Activated CD4-positive, alpha-beta T cell treated with anti-CD3 and anti-CD28 coated beads for 36 hours (primary cell): ENCODE measurements at regions of chr17 and their contacts with region 1.

Region 1: DNA sequence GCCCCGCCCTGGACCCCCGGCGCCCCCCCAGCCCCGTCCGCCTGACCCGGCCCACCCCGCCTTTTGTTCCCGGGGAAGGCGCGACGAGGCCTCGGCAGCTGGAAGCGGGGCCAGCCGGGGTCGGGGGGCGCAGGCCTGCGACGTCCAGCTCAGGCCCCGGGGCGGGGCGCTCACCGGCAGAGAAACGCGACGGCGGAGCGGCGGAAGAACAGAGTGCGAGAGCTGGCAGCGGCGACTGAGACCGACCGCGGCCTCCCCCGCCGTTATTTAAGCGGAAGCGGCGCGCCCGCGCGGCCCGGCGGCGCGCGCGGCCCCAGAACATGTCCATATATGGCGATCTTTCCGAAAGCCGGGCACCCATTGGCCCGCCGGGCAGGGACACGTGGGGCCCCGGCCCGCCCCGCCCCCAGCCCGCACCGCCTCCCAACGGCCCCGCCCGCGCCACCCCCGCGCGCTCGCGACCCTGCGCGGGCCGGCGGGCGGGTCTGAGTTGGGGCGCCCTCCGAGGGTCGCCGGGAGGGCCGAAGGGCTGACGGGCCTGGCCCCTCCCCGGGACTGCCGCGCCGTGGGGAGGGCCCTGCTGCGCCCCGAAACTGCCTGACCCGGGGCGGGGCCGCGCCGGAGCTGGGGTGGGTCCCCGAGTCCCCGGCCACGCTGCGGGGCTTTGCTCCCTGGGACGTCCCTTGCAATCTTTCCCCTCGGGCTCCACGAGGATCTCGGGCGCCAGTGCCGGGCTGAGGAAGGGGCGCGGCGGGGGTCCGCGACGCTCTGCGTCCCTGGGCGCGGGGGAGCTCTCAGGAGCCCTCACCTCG is at the start of gene ACTG1:
- DNase-seq: peak; percentile 95
- ATAC-seq: peak; percentile 61
- H3K4me3 Mint-ChIP-seq: peak within 1 kb of the TSS; percentile 97
- H3K27ac Mint-ChIP-seq: peak within 1 kb of the TSS; percentile 89
- H3K4me1 Mint-ChIP-seq: peaks cover 21% of the 10 kb centered on the region
- H3K27me3 Mint-ChIP-seq: no peaks in the 10 kb centered on the region
- total RNA-seq, gene ACTG1: 4,119 to 5,987 TPM

Region 2: DNA sequence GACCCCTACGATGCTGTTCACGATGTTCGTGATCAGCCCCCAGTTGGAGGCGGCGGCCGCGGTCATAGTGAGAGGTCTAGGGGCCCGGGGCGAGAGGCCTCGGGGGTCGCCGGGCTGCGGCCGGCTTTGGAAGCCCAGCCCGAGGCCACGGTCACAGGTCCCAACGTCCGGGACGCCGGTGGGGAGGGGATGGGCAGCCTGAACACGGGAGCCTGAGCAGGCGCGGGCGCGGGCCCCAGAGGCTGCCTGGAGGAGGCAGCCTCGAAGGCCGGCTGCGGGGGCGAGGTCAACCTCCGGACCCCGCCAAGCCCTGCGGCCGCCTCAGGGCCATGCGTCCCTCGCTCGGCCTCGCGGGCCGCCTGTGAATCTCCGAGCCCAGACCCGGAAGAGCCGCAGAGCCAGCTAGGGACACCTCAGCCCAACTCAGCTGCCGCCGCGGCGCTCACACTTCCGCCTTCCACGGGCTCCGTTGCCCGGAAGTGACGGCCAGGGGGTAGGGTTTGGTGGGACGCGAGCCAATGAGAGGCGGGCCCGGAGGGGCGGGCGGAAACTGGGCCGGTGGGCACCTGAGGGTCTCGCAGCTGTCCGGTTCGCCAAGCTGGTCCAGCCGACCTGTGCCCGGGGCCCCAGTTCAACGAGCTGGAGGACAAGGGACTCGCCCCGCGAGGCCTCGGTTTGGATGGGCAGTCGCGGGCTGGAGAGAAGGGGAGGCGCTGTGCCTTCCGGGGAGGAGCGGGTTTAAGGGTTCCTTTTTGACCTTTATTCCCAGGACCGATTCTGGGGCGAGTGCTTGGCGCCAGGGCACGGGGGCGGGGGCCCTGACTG is 217.7 kb before region 1 on chr17 and contains the start of gene SLC38A10:
- CTCF ChIA-PET with region 1: interaction called, 3 read pairs
- POLR2A ChIA-PET with region 1: no interaction called
- intact Hi-C with region 1: loop called in 1 of 2 experiments (anchors 1 kb)
- DNase-seq: peak; percentile 95
- ATAC-seq: peak; percentile 91
- H3K4me3 Mint-ChIP-seq: peak within 1 kb of the TSS; percentile 89
- H3K27ac Mint-ChIP-seq: peak within 1 kb of the TSS; percentile 96
- H3K4me1 Mint-ChIP-seq: peaks cover 36% of the 10 kb centered on the region
- H3K27me3 Mint-ChIP-seq: no peaks in the 10 kb centered on the region
- total RNA-seq, gene SLC38A10: 47.6 to 52.9 TPM

Region 3: DNA sequence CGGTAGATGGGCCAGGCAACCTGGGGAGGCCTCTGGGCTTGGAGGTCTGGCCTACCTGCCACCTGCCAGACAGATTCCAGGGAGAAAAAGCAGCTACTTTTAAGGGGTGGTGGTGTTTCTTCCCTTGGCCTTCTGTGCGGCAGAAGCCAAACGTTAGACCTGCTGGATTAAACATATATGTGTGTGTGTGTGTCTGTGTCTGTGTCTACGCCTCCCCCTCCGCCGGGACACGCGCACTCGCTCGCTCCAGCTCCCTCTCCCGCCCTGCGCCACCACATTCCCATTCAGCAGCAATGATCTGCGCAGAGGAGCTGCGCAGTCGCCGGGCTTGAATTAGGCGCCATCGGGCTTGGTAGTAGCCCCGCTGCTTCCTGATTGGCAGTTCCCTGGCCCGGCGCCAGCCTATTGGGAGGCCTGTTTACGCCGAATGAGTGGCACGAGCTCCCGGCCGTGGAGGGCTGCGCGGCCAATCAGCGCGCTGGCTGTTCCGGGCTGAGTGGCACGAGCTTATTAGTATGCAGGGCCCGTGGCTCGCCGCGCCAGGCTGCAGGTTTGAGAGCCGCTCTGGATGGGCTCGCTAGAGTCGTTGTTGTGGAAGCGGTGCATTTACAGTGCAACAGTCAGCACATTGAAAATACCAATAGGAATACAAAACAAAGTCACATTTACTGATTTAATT is 117.7 kb before region 1 on chr17 and contains the start of gene BAHCC1:
- CTCF ChIA-PET with region 1: no interaction called
- POLR2A ChIA-PET with region 1: interaction called, 3 read pairs
- intact Hi-C with region 1: loop called (anchors 1 to 2 kb)
- DNase-seq: peak; percentile 97
- ATAC-seq: peak; percentile 92
- H3K4me3 Mint-ChIP-seq: peak within 1 kb of the TSS; percentile 46
- H3K27ac Mint-ChIP-seq: peak within 1 kb of the TSS; percentile 39
- H3K4me1 Mint-ChIP-seq: peaks cover 24% of the 10 kb centered on the region
- H3K27me3 Mint-ChIP-seq: peaks cover 51% of the 10 kb centered on the region
- total RNA-seq, gene BAHCC1: 0.05 TPM in 1 of 2 experiments, not detected in the other

Region 4: GRCh38 chr17:81553018-81553615 is 40.4 kb after region 1 on chr17:
- CTCF ChIA-PET with region 1: interaction called, 4 read pairs
- POLR2A ChIA-PET with region 1: interaction called, 11 read pairs
- intact Hi-C with region 1: loop called (anchors 1 to 2 kb)
- DNase-seq: peak; percentile 91
- ATAC-seq: peak; percentile 78
- H3K4me3 Mint-ChIP-seq: peak overlapping the region; percentile 89
- H3K27ac Mint-ChIP-seq: peak overlapping the region; percentile 86
- H3K4me1 Mint-ChIP-seq: peaks cover 38% of the 10 kb centered on the region
- H3K27me3 Mint-ChIP-seq: no peaks in the 10 kb centered on the region

Region 5: GRCh38 chr17:81636505-81637288 is 123.9 kb after region 1 on chr17 and contains the starts of genes NPLOC4 and TSPAN10:
- CTCF ChIA-PET with region 1: no interaction called
- POLR2A ChIA-PET with region 1: no interaction called
- intact Hi-C with region 1: loop called in 1 of 2 experiments (anchors 2 kb)
- DNase-seq: peak; percentile 91
- ATAC-seq: peak; percentile 89
- H3K4me3 Mint-ChIP-seq: peak within 1 kb of the TSS; percentile 96
- H3K27ac Mint-ChIP-seq: peak within 1 kb of the TSS; percentile 84
- H3K4me1 Mint-ChIP-seq: peaks cover 23% of the 10 kb centered on the region
- H3K27me3 Mint-ChIP-seq: no peaks in the 10 kb centered on the region
- total RNA-seq, gene NPLOC4: 71.8 to 93.1 TPM
- total RNA-seq, gene TSPAN10: 0.34 to 0.35 TPM

Region 6: GRCh38 chr17:81683584-81684237 is 170.9 kb after region 1 on chr17 and contains the starts of genes ARL16 and HGS:
- CTCF ChIA-PET with region 1: no interaction called
- POLR2A ChIA-PET with region 1: no interaction called
- intact Hi-C with region 1: loop called in 1 of 2 experiments (anchors 5 kb)
- DNase-seq: peak; percentile 98
- ATAC-seq: peak; percentile 98
- H3K4me3 Mint-ChIP-seq: peak within 1 kb of the TSS; percentile 87
- H3K27ac Mint-ChIP-seq: peak within 1 kb of the TSS; percentile 83
- H3K4me1 Mint-ChIP-seq: peaks cover 30% of the 10 kb centered on the region
- H3K27me3 Mint-ChIP-seq: no peaks in the 10 kb centered on the region
- total RNA-seq, gene ARL16: 39.0 to 39.1 TPM
- total RNA-seq, gene HGS: 100 to 102 TPM

Region 7: GRCh38 chr17:82041144-82041814 is 528.5 kb after region 1 on chr17:
- CTCF ChIA-PET with region 1: no interaction called
- POLR2A ChIA-PET with region 1: no interaction called
- intact Hi-C with region 1: no loop called
- DNase-seq: no peak
- ATAC-seq: no peak
- H3K4me3 Mint-ChIP-seq: no peak overlapping the region
- H3K27ac Mint-ChIP-seq: peak overlapping the region; percentile 15
- H3K4me1 Mint-ChIP-seq: peaks cover 12% of the 10 kb centered on the region
- H3K27me3 Mint-ChIP-seq: no peaks in the 10 kb centered on the region

Region 8: DNA sequence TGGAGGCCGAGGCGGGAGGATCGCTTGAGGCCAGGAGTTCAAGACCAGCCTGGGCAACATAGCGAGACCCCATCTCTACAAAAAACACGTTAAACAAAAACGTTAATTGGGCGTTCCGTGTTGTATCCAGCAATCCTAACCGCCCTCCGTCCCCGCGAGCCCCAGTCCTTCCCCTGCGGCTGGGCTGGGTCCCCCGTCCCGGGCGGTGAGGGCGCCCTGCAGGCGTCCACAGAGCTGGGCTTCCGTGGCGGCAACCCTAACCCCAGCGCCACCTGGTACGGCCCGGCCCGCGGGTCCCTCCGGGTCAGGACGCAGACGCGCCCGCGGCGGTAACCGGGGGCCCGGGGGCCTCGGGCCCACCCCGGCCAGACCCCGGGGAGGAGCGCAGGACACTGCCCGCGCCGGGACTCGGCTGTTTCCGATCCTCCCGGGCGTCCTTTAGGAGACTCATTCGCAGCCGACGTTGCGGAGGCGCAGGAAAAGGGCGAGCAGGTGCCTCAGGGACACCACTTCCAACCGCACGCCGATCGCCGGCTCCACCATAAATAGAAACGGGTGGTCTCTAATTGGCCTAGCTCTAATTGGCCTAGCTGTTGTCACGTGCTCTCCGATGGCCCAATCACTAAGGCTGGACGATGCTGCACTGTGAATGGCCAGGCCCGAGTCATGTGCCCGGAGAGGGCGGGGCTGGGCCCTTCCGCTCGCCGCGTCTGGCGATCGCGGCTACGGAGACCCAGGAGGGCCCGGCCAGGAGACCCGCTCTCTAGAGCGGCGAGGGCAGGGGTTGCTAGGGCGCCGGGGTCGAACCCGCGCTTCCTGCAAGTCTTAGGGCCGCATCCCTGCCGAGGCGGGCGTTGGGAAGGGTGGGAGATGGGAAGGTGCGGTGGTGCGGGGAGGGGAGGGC is 779.7 kb after region 1 on chr17:
- CTCF ChIA-PET with region 1: no interaction called
- POLR2A ChIA-PET with region 1: no interaction called
- intact Hi-C with region 1: loop called in 1 of 2 experiments (anchors 10 kb)
- DNase-seq: peak; percentile 96
- ATAC-seq: peak; percentile 89
- H3K4me3 Mint-ChIP-seq: peak overlapping the region; percentile 78
- H3K27ac Mint-ChIP-seq: peak overlapping the region; percentile 85
- H3K4me1 Mint-ChIP-seq: peaks cover 71% of the 10 kb centered on the region
- H3K27me3 Mint-ChIP-seq: no peaks in the 10 kb centered on the region